ENCODE measurements at regions of chr22 and their contacts with region 1.

Region 1: GRCh38 chr22:23893943-23894709 is at the start of gene MIF:
- DNase-seq: peak; percentile 98
- H3K4me3 Mint-ChIP-seq: peak within 1 kb of the TSS; percentile 97
- H3K27ac Mint-ChIP-seq: peak within 1 kb of the TSS; percentile 98
- H3K4me1 Mint-ChIP-seq: peaks cover 23% of the 10 kb centered on the region
- H3K27me3 Mint-ChIP-seq: no peaks in the 10 kb centered on the region
- total RNA-seq, gene MIF: 1,215 to 1,240 TPM

Region 2: GRCh38 chr22:23786752-23787599 is 107.2 kb before region 1 on chr22 and contains the start of gene SMARCB1:
- CTCF ChIA-PET with region 1: interaction called, 3 read pairs
- POLR2A ChIA-PET with region 1: interaction called, 3 read pairs
- intact Hi-C with region 1: loop called (anchors 2 kb)
- DNase-seq: peak; percentile 93
- H3K4me3 Mint-ChIP-seq: peak within 1 kb of the TSS; percentile 86
- H3K27ac Mint-ChIP-seq: peak within 1 kb of the TSS; percentile 94
- H3K4me1 Mint-ChIP-seq: peaks cover 25% of the 10 kb centered on the region
- H3K27me3 Mint-ChIP-seq: no peaks in the 10 kb centered on the region
- total RNA-seq, gene SMARCB1: 71.3 to 72.5 TPM

Region 3: GRCh38 chr22:23849009-23850006 is 44.8 kb before region 1 on chr22:
- CTCF ChIA-PET with region 1: interaction called, 26 read pairs
- POLR2A ChIA-PET with region 1: interaction called, 5 read pairs
- intact Hi-C with region 1: no loop called
- DNase-seq: peak; percentile 91
- H3K4me3 Mint-ChIP-seq: no peak overlapping the region
- H3K27ac Mint-ChIP-seq: no peak overlapping the region
- H3K4me1 Mint-ChIP-seq: peaks cover 7% of the 10 kb centered on the region
- H3K27me3 Mint-ChIP-seq: peaks cover 2% of the 10 kb centered on the region

Region 4: GRCh38 chr22:23913661-23914353 is 19.7 kb after region 1 on chr22:
- CTCF ChIA-PET with region 1: interaction called, 18 read pairs
- POLR2A ChIA-PET with region 1: interaction called, 56 read pairs
- intact Hi-C with region 1: loop called (anchors 1 kb)
- DNase-seq: peak; percentile 100
- H3K4me3 Mint-ChIP-seq: peak overlapping the region; percentile 92
- H3K27ac Mint-ChIP-seq: peak overlapping the region; percentile 97
- H3K4me1 Mint-ChIP-seq: peaks cover 15% of the 10 kb centered on the region
- H3K27me3 Mint-ChIP-seq: no peaks in the 10 kb centered on the region

Measured in activated CD4-positive, alpha-beta memory T cell treated with anti-CD3 and anti-CD28 coated beads for 36 hours (primary cell).